Naive thymus-derived CD4-positive, alpha-beta T cell (primary cell): ENCODE measurements at regions of chr10 and their contacts with region 1.

Region 1: GRCh38 chr10:119478111-119478802 is 64.3 kb downstream of the RGS10 start:
- DNase-seq: peak in 2 of 9 donors; percentile 5 to 35
- ATAC-seq: peak; percentile 64
- H3K4me3 ChIP-seq: no peak overlapping the region
- H3K4me3 Mint-ChIP-seq: peak overlapping the region; percentile 66 to 81 (median 71)
- H3K27ac ChIP-seq: no peak overlapping the region
- H3K27ac Mint-ChIP-seq: peak overlapping the region; percentile 23 to 81 (median 71)
- H3K4me1 ChIP-seq: peaks cover 20 to 26% of the 10 kb centered on the region in 2 donors
- H3K4me1 Mint-ChIP-seq: peaks cover 25 to 44% (median 35%) of the 10 kb centered on the region in 7 donors
- H3K27me3 ChIP-seq: no peaks in the 10 kb centered on the region
- H3K27me3 Mint-ChIP-seq: peaks cover 0 to 6% (median 0%) of the 10 kb centered on the region in 5 donors

Region 2: GRCh38 chr10:119465085-119465484 is 13.2 kb before region 1 on chr10:
- CTCF ChIA-PET with region 1: no interaction called
- POLR2A ChIA-PET with region 1: interaction called, 3 read pairs
- intact Hi-C with region 1: loop called in 1 of 2 experiments (anchors 2 kb)
- DNase-seq: no peak
- ATAC-seq: no peak
- H3K4me3 ChIP-seq: no peak overlapping the region
- H3K4me3 Mint-ChIP-seq: no peak overlapping the region
- H3K27ac ChIP-seq: no peak overlapping the region
- H3K27ac Mint-ChIP-seq: peak overlapping the region in 1 of 9 donors; percentile 60
- H3K4me1 ChIP-seq: peaks cover 0 to 16% of the 10 kb centered on the region in 2 donors
- H3K4me1 Mint-ChIP-seq: peaks cover 0 to 18% (median 13%) of the 10 kb centered on the region in 7 donors
- H3K27me3 ChIP-seq: no peaks in the 10 kb centered on the region
- H3K27me3 Mint-ChIP-seq: peaks cover 0 to 3% (median 0%) of the 10 kb centered on the region in 5 donors

Region 3: GRCh38 chr10:119489991-119490326 is 11.7 kb after region 1 on chr10:
- CTCF ChIA-PET with region 1: interaction called, 7 read pairs
- POLR2A ChIA-PET with region 1: interaction called, 19 read pairs
- intact Hi-C with region 1: loop called (anchors 1 kb)
- DNase-seq: no peak
- ATAC-seq: no peak
- H3K4me3 ChIP-seq: peak overlapping the region; percentile 55
- H3K4me3 Mint-ChIP-seq: peak overlapping the region; percentile 53 to 92 (median 84)
- H3K27ac ChIP-seq: peak overlapping the region; percentile 83
- H3K27ac Mint-ChIP-seq: peak overlapping the region; percentile 80 to 98 (median 92)
- H3K4me1 ChIP-seq: peaks cover 24 to 36% of the 10 kb centered on the region in 2 donors
- H3K4me1 Mint-ChIP-seq: peaks cover 19 to 66% (median 59%) of the 10 kb centered on the region in 7 donors
- H3K27me3 ChIP-seq: no peaks in the 10 kb centered on the region
- H3K27me3 Mint-ChIP-seq: no peaks in the 10 kb centered on the region